Activated CD8-positive, alpha-beta T cell treated with anti-CD3 and anti-CD28 coated beads for 36 hours (primary cell): ENCODE measurements at regions of chr19 and their contacts with region 1.

Region 1: GRCh38 chr19:45059278-45059965 is 16.9 kb downstream of the ZNF296 start:
- DNase-seq: peak; percentile 92
- ATAC-seq: peak; percentile 95
- H3K4me3 Mint-ChIP-seq: no peak overlapping the region
- H3K27ac Mint-ChIP-seq: no peak overlapping the region
- H3K4me1 Mint-ChIP-seq: peaks cover 2% of the 10 kb centered on the region
- H3K27me3 Mint-ChIP-seq: no peaks in the 10 kb centered on the region
- CTCF ChIP-seq: peak; percentile 88

Region 2: GRCh38 chr19:44988896-44989556 is 70.4 kb before region 1 on chr19:
- CTCF ChIA-PET with region 1: interaction called, 13 read pairs
- POLR2A ChIA-PET with region 1: no interaction called
- intact Hi-C with region 1: no loop called
- DNase-seq: peak; percentile 79
- ATAC-seq: peak; percentile 96
- H3K4me3 Mint-ChIP-seq: no peak overlapping the region
- H3K27ac Mint-ChIP-seq: peak overlapping the region; percentile 38
- H3K4me1 Mint-ChIP-seq: no peaks in the 10 kb centered on the region
- H3K27me3 Mint-ChIP-seq: no peaks in the 10 kb centered on the region
- CTCF ChIP-seq: peak; percentile 50

Region 3: DNA sequence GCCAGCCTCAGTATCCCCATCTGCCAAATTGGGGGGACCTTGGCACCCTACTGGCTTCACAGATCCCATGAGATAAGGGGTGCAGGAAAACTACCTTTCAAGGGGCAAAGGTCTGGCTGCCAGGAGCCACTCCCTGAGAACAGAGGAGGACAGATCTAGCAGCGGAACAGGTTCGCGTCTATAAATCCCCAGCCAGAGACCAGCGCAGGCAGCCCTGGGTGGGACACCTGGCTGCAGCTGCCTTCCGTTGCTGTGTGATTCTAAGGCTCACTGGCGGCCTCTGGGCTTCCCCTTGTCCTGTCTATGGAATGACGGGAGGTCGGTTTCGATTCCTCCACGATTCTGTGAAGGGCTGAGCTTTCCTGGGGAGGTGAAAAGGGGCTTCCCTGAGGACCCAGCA is 50.9 kb before region 1 on chr19:
- CTCF ChIA-PET with region 1: no interaction called
- POLR2A ChIA-PET with region 1: no interaction called
- intact Hi-C with region 1: no loop called
- DNase-seq: no peak
- ATAC-seq: no peak
- H3K4me3 Mint-ChIP-seq: no peak overlapping the region
- H3K27ac Mint-ChIP-seq: no peak overlapping the region
- H3K4me1 Mint-ChIP-seq: peaks cover 7% of the 10 kb centered on the region
- H3K27me3 Mint-ChIP-seq: no peaks in the 10 kb centered on the region
- CTCF ChIP-seq: no peak

Region 4: DNA sequence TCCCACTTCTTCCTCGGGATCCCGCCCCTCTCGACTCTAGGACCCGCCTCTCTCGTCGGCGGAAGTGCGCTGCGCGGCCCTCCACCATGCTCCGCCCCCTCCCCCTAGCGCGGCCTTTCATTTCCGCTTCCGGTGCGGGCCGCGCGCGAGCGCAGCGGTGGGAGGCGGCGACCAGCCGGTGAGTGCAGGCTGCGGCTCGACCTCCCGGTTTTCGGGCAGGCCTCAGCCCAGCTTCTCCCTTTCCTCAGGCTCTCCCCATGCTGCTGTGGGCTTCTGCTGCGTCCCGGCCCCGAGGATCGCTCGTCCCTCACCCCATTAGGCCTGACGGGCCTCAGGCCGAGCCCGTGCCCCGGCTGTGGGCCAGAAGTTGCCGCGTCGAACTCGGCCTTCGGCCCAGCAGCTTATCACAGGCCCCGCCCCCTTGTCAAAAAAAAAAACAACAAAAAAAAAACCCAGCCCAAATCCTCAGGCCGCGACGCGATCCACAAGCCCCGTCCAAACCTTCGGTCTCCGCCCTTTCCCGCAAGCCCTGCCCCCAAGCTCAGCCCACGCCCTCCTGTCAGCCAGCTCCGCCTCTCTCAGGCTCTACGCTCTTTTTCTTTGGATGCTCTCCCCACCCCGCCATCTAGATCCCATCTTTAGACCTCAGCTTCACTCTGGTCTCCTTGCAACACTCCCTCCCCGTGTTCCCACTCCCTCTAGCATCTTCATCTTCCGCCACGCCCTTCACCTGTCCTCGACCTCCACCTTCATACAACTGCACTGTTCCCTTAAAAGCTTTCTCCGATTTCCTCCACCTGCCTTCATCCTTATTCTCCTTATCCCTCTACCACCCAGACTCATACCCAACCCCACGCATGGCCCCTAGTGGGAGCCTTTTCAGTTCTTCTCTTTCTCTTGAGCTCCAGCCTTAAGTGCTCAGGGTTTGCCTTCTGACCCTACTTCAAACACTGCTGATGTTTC is 20.2 kb before region 1 on chr19 and contains the start of gene CLASRP:
- CTCF ChIA-PET with region 1: interaction called, 27 read pairs
- POLR2A ChIA-PET with region 1: interaction called, 6 read pairs
- intact Hi-C with region 1: no loop called
- DNase-seq: peak; percentile 91
- ATAC-seq: peak; percentile 98
- H3K4me3 Mint-ChIP-seq: peak within 1 kb of the TSS; percentile 92
- H3K27ac Mint-ChIP-seq: peak within 1 kb of the TSS; percentile 94
- H3K4me1 Mint-ChIP-seq: peaks cover 28% of the 10 kb centered on the region
- H3K27me3 Mint-ChIP-seq: no peaks in the 10 kb centered on the region
- CTCF ChIP-seq: no peak
- total RNA-seq, gene CLASRP: 72.7 to 80.5 TPM

Region 5: DNA sequence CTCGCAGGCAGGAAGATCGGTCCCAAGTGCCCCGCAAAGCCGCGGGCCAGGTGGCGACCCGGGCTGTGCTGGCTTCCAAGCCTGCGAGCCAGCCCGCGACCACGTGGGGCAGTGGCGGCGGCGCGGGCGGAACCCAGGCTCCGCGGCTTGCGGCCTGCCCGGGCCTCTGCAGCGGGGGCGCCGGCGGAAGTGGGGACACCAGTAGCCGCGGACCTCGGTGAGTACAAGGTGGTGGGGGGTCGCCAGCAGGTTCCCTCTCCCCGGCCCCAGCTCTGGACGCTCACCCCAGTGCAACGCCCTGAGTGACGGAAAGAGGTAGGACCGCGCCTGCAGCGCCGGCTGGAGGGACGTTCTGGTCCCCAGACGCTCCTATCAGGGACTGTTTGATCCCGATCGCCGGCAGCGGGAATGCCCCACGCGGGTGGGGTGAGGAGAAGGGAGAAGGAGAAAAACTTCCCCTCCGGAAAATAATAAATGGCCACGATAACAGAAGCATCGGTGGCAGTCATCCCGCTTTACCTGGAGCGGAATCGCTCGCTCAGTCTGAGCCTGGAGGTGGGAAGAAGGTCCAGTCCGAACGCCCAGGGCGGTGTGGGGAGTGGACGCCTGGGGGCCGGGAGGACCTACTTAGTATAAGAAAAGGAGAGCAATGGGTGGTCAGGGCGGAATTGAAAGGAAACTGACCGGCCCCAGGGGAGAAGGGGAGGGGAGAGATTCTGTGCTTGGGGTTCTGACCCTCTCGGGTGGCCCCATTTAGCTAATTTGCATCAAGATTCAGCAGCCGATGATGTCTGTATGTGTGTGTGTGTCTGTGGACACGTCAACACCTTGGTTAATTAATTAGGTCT is 19.9 kb after region 1 on chr19 and contains the start of gene GEMIN7:
- CTCF ChIA-PET with region 1: interaction called, 11 read pairs
- POLR2A ChIA-PET with region 1: interaction called, 3 read pairs
- intact Hi-C with region 1: no loop called
- DNase-seq: peak; percentile 84
- ATAC-seq: peak; percentile 68
- H3K4me3 Mint-ChIP-seq: peak within 1 kb of the TSS; percentile 98
- H3K27ac Mint-ChIP-seq: peak within 1 kb of the TSS; percentile 91
- H3K4me1 Mint-ChIP-seq: peaks cover 40% of the 10 kb centered on the region
- H3K27me3 Mint-ChIP-seq: no peaks in the 10 kb centered on the region
- CTCF ChIP-seq: no peak
- total RNA-seq, gene GEMIN7: 44.1 to 46.8 TPM